CD4-positive, alpha-beta memory T cell (primary cell): ENCODE measurements at regions of chr2 and their contacts with region 1.

Region 1: GRCh38 chr2:96208143-96209010 is at the start of gene STARD7:
- DNase-seq: peak; percentile 94 to 96 (median 95)
- H3K4me3 ChIP-seq: peak within 1 kb of the TSS; percentile 45 to 62
- H3K4me3 Mint-ChIP-seq: peak within 1 kb of the TSS; percentile 88 to 98 (median 94)
- H3K27ac ChIP-seq: peak within 1 kb of the TSS; percentile 81
- H3K27ac Mint-ChIP-seq: peak within 1 kb of the TSS; percentile 92 to 96 (median 95)
- H3K4me1 ChIP-seq: peaks cover 53% of the 10 kb centered on the region
- H3K4me1 Mint-ChIP-seq: peaks cover 31 to 57% (median 51%) of the 10 kb centered on the region in 4 donors
- H3K27me3 ChIP-seq: no peaks in the 10 kb centered on the region
- H3K27me3 Mint-ChIP-seq: no peaks in the 10 kb centered on the region
- total RNA-seq, gene STARD7: 84.9 to 92.9 TPM

Region 2: DNA sequence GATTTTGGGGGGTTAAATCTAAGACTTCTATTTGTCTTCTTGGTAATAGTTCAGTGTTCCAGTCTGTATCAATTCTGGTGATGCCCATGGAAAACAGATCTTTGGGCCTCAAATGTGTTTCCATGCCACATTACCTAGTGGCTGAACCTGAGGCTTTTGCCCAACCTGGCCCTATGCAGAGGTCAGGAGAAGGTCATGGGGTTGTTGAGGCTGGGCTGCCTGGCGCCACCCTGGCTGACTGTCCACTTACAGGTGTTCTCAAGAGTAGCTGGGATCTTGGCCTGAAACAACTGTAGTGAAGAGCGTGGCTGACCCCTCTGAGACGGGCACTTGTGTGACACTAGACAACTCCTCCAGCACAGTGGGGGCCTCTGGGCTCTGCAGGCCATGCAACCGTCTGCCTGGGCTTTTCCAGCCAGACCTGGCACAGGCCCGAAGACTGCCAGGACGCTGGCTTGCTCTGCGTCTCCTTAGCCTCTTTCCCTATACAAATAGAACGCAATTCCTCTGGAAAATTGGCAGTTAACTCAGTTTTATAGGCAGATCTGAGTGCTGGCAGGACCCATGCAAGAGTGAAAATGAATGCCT is 488.8 kb before region 1 on chr2:
- CTCF ChIA-PET with region 1: no interaction called
- POLR2A ChIA-PET with region 1: no interaction called
- intact Hi-C with region 1: no loop called
- DNase-seq: no peak
- H3K4me3 ChIP-seq: no peak overlapping the region
- H3K4me3 Mint-ChIP-seq: no peak overlapping the region
- H3K27ac ChIP-seq: no peak overlapping the region
- H3K27ac Mint-ChIP-seq: no peak overlapping the region
- H3K4me1 ChIP-seq: no peaks in the 10 kb centered on the region
- H3K4me1 Mint-ChIP-seq: no peaks in the 10 kb centered on the region
- H3K27me3 ChIP-seq: no peaks in the 10 kb centered on the region
- H3K27me3 Mint-ChIP-seq: peaks cover 2 to 10% of the 10 kb centered on the region in 2 donors

Region 3: DNA sequence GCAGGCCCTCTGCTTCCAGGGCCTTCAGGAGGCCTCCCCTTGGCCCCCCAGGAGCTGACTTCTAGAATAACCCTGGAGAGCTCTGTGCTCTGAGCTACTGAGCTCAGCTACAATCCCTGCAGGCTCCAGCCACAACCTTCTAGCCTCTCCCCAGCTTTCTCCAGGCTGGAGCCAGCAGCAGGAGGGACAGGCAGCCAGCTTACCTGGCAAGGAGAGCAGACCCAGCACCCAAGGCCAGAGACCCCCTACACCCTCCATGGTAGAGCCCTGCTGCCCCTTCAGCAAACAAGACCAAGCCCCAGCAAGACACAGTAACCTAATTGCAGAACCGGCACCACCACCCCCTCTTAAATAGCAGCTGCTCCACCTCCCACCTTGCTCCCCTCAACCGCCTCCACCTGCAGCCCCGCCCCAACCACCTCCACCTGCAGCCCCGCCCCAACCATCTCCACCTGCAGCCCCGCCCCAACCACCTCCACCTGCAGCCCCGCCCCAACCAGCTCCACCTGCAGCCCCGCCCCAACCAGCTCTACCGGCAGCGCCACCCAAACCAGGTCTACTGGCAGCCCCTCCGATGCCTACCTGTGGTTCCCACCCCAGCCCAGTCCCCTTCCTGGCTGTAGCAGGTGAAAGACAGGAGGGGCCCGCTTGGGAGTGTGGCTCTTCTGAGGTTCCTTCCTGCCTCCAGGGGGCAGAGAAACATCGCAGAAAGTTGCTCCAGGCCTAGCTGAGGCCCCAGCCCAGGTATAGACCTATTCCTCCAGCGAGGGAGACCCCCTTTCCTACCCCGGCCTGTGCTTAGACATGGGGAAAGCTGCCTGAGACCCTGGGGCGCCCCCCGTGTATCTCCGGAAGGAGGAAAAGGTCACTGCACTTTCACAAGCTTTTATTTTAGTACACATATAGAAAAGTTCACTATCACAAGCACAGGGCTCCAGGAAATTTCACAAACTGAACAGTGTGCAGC is 69.9 kb before region 1 on chr2 and contains the start of gene ASTL:
- CTCF ChIA-PET with region 1: interaction called, 8 read pairs
- POLR2A ChIA-PET with region 1: interaction called, 34 read pairs
- intact Hi-C with region 1: loop called (anchors 1 kb)
- DNase-seq: peak; percentile 60 to 74 (median 69)
- H3K4me3 ChIP-seq: no peak within 1 kb of the TSS
- H3K4me3 Mint-ChIP-seq: peak within 1 kb of the TSS in 1 of 8 donors; percentile 10
- H3K27ac ChIP-seq: no peak within 1 kb of the TSS
- H3K27ac Mint-ChIP-seq: peak within 1 kb of the TSS in 6 of 7 donors; percentile 60 to 96 (median 72)
- H3K4me1 ChIP-seq: peaks cover 17% of the 10 kb centered on the region
- H3K4me1 Mint-ChIP-seq: peaks cover 13 to 35% (median 16%) of the 10 kb centered on the region in 4 donors
- H3K27me3 ChIP-seq: no peaks in the 10 kb centered on the region
- H3K27me3 Mint-ChIP-seq: no peaks in the 10 kb centered on the region
- total RNA-seq, gene ASTL: 1.3 TPM in 1 of 2 experiments, not detected in the other

Region 4: DNA sequence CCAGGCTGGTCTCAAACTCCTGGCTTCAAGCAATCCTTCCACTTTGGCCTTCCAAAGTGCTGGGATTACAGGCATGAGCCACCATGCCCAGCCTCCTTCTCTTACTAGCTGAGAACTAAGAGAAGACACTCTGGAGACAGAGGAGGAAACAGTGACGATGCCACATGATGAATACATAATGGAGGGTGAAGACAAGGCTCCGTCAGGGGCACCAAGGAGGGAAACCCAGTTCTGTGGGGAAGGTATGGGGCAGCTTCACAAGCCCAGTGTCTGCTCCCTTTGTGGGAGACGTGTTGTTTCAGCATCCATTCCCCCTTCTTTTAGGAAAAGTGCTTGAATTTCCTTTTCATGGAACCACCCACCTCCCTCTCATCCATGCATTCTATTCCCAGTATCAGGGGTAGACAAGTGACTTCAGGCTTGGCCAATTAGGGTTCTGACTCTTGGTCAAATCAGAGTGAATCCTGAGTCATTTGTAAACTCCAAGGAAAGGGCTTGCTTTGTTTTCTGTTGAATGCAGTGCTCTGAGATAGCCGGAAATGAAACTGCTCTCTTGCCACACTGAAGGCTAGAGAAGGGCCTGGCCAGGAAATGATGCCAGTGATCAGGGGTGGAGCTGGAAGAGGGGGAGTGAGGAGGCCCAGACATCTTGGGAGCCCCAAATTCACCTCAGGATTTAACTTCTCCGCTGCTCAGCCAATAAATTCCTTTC is 33.7 kb after region 1 on chr2:
- CTCF ChIA-PET with region 1: interaction called, 3 read pairs
- POLR2A ChIA-PET with region 1: interaction called, 37 read pairs
- intact Hi-C with region 1: loop called (anchors 2 kb)
- DNase-seq: peak; percentile 44 to 74 (median 52)
- H3K4me3 ChIP-seq: peak overlapping the region in 1 of 2 donors; percentile 18
- H3K4me3 Mint-ChIP-seq: peak overlapping the region; percentile 58 to 84 (median 74)
- H3K27ac ChIP-seq: peak overlapping the region; percentile 65
- H3K27ac Mint-ChIP-seq: peak overlapping the region; percentile 91 to 98 (median 96)
- H3K4me1 ChIP-seq: peaks cover 42% of the 10 kb centered on the region
- H3K4me1 Mint-ChIP-seq: peaks cover 34 to 60% (median 46%) of the 10 kb centered on the region in 4 donors
- H3K27me3 ChIP-seq: no peaks in the 10 kb centered on the region
- H3K27me3 Mint-ChIP-seq: no peaks in the 10 kb centered on the region

Region 5: DNA sequence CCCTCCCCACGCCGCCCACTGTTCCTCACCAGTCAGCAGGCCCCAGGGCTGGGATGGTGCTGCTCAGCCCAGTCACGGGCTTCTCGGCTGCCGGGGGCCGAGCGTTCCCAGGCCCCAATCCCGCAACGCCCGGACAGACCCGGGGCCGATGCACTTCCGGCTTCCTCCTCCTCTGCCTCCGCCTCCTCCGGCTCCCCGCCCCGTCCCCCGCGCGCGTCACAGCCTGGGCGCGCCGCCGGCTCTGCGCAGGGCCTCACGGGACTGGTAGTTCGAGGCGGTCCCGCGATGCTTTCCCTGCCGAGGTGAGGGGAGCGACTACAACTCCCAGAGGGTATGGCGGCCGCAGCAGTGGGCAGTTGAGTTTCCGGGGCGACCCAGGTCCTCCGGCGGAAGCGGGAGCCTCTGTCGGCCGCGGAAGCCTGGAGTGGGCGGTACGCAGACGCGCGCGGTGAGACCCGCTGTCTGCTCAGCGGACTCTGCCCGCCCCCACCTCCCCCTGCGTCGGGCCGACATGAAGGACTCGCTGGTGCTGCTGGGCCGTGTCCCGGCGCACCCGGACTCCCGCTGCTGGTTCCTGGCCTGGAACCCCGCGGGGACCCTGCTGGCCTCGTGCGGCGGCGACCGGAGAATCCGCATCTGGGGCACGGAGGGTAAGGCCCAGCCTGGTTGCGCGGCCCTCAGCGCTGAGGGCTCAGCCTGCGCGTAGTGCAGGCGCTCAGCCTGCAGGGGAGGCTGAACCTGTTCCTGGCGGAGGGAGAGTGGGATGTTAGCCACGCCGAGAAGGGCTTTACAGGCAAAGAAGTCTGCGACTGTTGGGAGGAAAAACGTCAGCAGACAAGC is 57.7 kb after region 1 on chr2 and contains the starts of genes CIAO1 and TMEM127:
- CTCF ChIA-PET with region 1: interaction called, 9 read pairs
- POLR2A ChIA-PET with region 1: interaction called, 20 read pairs
- intact Hi-C with region 1: loop called (anchors 1 kb)
- DNase-seq: peak; percentile 97 to 98 (median 97)
- H3K4me3 ChIP-seq: peak within 1 kb of the TSS; percentile 85 to 97
- H3K4me3 Mint-ChIP-seq: peak within 1 kb of the TSS; percentile 91 to 99 (median 94)
- H3K27ac ChIP-seq: peak within 1 kb of the TSS; percentile 94
- H3K27ac Mint-ChIP-seq: peak within 1 kb of the TSS; percentile 80 to 99 (median 94)
- H3K4me1 ChIP-seq: peaks cover 49% of the 10 kb centered on the region
- H3K4me1 Mint-ChIP-seq: peaks cover 22 to 64% (median 48%) of the 10 kb centered on the region in 4 donors
- H3K27me3 ChIP-seq: no peaks in the 10 kb centered on the region
- H3K27me3 Mint-ChIP-seq: no peaks in the 10 kb centered on the region
- total RNA-seq, gene CIAO1: 78.3 to 87.3 TPM
- total RNA-seq, gene TMEM127: 45.1 to 45.6 TPM

Region 6: DNA sequence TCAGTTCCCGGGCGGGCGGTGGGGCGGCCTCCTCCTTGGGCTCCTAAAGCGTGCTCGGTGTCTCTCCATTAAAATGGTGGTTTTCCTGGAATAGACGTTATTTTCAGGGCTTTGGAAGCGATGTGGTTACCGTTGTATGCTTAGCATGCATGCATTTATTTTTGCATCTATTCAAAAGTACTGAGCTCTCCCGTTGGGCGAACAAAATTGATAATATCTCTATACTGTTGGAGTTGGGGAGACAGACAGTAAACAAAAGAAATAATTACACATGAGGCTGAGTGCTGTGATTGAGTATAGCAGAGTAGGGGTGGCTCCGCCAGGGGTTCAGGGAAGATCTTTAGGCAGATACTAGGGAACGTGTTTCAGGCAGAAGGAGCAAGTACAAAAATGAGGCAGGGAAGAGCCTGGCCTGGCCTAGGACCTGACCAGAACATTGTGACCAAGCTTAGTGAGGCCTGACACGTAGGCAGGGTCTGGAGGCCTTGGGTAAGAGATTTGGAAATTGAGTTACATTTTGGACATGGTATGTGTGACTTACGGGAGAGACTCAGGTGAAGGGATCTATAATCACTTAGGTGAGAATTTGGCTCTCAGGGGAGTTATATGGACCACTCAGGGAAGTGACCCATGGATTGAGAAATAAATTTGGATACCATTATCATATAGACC is 127.9 kb after region 1 on chr2:
- CTCF ChIA-PET with region 1: no interaction called
- POLR2A ChIA-PET with region 1: interaction called, 12 read pairs
- intact Hi-C with region 1: loop called (anchors 5 kb)
- DNase-seq: no peak
- H3K4me3 ChIP-seq: peak overlapping the region; percentile 42 to 75
- H3K4me3 Mint-ChIP-seq: peak overlapping the region; percentile 66 to 89 (median 80)
- H3K27ac ChIP-seq: peak overlapping the region; percentile 86
- H3K27ac Mint-ChIP-seq: peak overlapping the region; percentile 60 to 94 (median 84)
- H3K4me1 ChIP-seq: peaks cover 35% of the 10 kb centered on the region
- H3K4me1 Mint-ChIP-seq: peaks cover 22 to 48% (median 31%) of the 10 kb centered on the region in 4 donors
- H3K27me3 ChIP-seq: no peaks in the 10 kb centered on the region
- H3K27me3 Mint-ChIP-seq: no peaks in the 10 kb centered on the region

Region 7: DNA sequence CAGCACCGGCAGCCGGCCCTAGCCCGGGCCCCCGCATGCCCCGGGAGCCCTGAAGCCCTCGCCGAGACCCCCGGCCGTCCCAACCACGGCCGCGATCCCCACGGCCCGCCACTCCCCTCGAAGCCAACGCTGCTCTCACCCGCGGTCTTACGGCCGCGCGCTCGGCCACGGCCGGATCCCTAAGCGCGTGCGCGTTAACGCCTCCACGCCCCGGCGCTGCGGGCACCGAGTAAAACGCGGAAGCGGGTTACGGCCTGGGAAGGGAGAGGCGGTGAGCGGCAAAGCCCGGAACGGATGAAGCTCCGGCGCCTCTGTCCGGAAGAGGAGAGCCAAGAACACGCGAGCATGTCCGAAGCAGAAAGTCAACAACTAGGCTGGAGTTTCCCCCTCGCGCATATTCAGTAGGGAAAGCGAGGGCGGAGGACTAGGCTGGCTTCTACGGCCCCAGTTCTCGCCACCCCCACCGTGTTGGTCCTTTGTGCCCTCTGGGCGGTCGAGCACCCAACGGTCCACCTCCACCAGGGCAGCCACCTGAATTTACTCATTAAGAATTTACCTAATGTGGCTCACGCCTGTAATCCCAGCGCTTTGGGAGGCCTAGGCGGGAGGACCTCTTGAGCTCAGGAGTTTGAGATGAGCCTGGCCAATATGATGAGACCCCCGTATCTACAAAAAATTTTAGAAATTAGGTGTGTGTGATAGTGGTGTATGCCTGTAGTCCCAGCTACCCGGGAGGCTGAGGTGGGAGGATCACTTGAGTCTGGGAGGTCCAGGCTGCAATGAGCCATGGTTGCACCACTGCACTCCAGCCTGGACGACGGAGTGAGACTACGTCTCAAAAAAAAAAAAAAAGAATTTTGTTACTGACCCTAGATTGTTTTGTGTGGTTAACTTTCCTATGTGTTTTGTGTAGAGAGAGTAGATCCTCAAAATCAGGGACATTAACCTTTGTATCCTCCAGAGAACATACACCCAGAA is 430.1 kb after region 1 on chr2 and contains the start of gene KANSL3:
- CTCF ChIA-PET with region 1: no interaction called
- POLR2A ChIA-PET with region 1: no interaction called
- intact Hi-C with region 1: no loop called
- DNase-seq: peak; percentile 86 to 93 (median 89)
- H3K4me3 ChIP-seq: peak within 1 kb of the TSS; percentile 79 to 92
- H3K4me3 Mint-ChIP-seq: peak within 1 kb of the TSS; percentile 94 to 100 (median 96)
- H3K27ac ChIP-seq: peak within 1 kb of the TSS; percentile 77
- H3K27ac Mint-ChIP-seq: peak within 1 kb of the TSS; percentile 95 to 99 (median 97)
- H3K4me1 ChIP-seq: peaks cover 39% of the 10 kb centered on the region
- H3K4me1 Mint-ChIP-seq: peaks cover 26 to 42% (median 35%) of the 10 kb centered on the region in 4 donors
- H3K27me3 ChIP-seq: no peaks in the 10 kb centered on the region
- H3K27me3 Mint-ChIP-seq: peaks cover 0 to 2% of the 10 kb centered on the region in 2 donors
- total RNA-seq, gene KANSL3: 63.3 to 69.7 TPM